MCF 10A (cell line): ENCODE measurements at regions of chr4 and their contacts with region 1.

Region 1: DNA sequence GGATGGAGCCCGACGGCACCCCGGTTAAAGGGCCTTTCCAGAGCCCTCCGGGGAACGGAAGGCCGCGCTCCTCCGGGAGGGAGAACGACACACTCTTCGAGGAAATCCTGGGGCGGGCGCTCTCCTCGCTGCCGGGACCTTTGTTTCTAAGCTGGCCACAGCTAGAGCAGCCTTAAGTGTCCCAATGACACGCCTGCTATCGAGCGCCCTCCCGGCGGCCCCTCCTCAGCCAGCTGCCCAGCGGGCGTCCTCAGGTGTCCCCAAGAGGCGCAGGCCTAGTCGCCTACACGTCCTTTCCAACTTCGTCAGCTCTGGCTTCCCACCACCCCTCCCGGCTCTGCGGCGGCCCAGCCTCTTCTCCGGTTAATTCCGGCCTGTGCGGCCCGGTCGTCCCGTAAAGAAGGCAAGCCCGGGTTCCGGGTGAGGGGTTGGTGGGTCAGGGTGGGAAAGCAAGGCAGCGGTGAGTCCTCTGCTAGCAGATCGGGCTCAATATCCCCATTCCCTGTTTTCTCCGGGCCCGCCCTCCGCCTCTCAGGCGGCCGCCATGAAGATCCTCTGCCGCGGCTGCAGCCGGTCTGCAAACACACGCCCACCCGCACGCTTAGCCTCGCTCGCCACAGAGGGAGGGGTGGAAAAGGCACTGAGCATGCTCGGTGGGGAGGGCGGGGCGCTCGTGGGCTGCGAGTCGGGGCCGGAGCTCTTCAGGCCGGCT is 449 bp upstream of the RAP1GDS1 start:
- DNase-seq: peak; percentile 95
- H3K4me3 Mint-ChIP-seq: peak overlapping the region; percentile 89
- H3K27ac Mint-ChIP-seq: peak overlapping the region; percentile 86
- H3K4me1 Mint-ChIP-seq: peaks cover 35% of the 10 kb centered on the region
- H3K27me3 Mint-ChIP-seq: no peaks in the 10 kb centered on the region
- CTCF ChIP-seq: no peak

Region 2: DNA sequence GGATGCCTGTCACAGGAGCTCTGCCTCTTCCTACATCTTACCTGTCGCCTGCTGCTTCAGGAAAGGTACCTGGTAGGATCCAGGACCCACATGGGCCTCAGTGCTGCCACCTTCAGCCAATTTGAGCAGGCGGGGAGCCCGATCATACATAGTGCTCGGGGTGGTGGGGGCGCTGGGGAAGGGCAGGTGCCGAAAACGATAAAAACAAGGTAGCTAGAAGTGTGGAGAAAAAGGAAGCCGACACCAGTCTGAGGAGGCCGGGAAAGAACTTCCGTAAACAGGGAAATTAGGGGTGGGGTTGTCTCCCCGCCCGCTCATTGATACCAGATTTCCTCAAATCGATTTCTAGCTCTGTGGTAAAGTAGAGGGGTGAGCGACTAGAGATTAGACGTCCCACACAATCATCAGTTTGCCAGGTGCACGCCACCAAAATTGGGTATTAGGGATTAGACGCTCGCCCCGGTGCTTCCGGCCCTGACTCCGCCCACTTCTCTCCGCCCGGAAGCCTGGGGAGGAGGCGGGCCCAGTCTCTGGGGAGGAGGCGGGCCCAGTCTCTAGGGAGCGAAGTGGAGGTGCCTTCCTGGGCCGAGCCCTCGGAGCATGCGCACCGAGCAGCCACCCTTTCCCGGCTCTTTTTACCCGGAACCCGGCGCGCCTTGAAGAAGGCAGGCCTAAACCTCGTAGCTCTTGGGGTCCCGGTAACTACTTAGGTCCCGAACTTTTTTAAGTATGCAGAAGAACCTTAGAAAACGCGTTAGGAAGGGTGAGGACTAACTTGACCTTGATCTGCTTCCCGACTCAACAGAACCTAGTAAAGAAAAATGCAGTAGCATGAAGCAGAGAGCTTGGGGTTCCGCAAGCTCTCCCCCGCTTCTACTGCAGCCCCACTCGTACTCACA is 117.5 kb before region 1 on chr4 and contains the start of gene STPG2:
- CTCF ChIA-PET with region 1: interaction called, 3 read pairs
- POLR2A ChIA-PET with region 1: interaction called, 71 read pairs
- intact Hi-C with region 1: no loop called
- DNase-seq: peak; percentile 96
- H3K4me3 Mint-ChIP-seq: peak within 1 kb of the TSS; percentile 91
- H3K27ac Mint-ChIP-seq: peak within 1 kb of the TSS; percentile 95
- H3K4me1 Mint-ChIP-seq: peaks cover 15% of the 10 kb centered on the region
- H3K27me3 Mint-ChIP-seq: no peaks in the 10 kb centered on the region
- CTCF ChIP-seq: peak; percentile 21
- total RNA-seq, gene STPG2: 0.22 and 0.61 TPM in 2 replicates

Region 3: DNA sequence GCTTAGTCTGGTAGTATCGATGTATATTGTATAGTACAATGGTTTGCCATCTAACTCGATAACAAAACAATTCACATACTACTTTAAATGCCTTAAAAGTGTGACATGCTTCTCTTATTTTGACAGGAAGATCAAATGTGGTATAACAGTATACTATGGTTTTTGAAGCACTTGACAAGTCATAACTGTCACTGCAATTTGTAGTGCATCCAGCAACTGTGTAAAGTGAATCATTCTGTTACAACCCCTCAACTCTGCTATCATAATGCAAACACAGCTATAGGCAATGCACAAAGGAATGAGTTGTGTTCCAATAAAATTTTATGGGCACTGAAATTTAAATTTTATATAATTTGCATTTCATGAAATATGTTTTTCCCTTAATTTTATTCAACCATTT is 14.4 kb after region 1 on chr4:
- CTCF ChIA-PET with region 1: interaction called, 4 read pairs
- POLR2A ChIA-PET with region 1: interaction called, 13 read pairs
- intact Hi-C with region 1: no loop called
- DNase-seq: no peak
- H3K4me3 Mint-ChIP-seq: no peak overlapping the region
- H3K27ac Mint-ChIP-seq: no peak overlapping the region
- H3K4me1 Mint-ChIP-seq: no peaks in the 10 kb centered on the region
- H3K27me3 Mint-ChIP-seq: no peaks in the 10 kb centered on the region
- CTCF ChIP-seq: no peak

Region 4: GRCh38 chr4:98377559-98377958 is 116.8 kb after region 1 on chr4:
- CTCF ChIA-PET with region 1: interaction called, 3 read pairs
- POLR2A ChIA-PET with region 1: interaction called, 21 read pairs
- intact Hi-C with region 1: no loop called
- DNase-seq: peak; percentile 5
- H3K4me3 Mint-ChIP-seq: no peak overlapping the region
- H3K27ac Mint-ChIP-seq: peak overlapping the region; percentile 49
- H3K4me1 Mint-ChIP-seq: no peaks in the 10 kb centered on the region
- H3K27me3 Mint-ChIP-seq: no peaks in the 10 kb centered on the region
- CTCF ChIP-seq: no peak

Region 5: GRCh38 chr4:98446499-98447375 is 186.0 kb after region 1 on chr4:
- CTCF ChIA-PET with region 1: interaction called, 3 read pairs
- POLR2A ChIA-PET with region 1: interaction called, 8 read pairs
- intact Hi-C with region 1: loop called (anchors 5 kb)
- DNase-seq: peak; percentile 85
- H3K4me3 Mint-ChIP-seq: peak overlapping the region; percentile 49
- H3K27ac Mint-ChIP-seq: peak overlapping the region; percentile 77
- H3K4me1 Mint-ChIP-seq: peaks cover 29% of the 10 kb centered on the region
- H3K27me3 Mint-ChIP-seq: no peaks in the 10 kb centered on the region
- CTCF ChIP-seq: no peak